ENCODE measurements at regions of chr7 and their contacts with region 1.

Region 1: GRCh38 chr7:50206453-50207250 is 97.9 kb upstream of the IKZF1 start:
- DNase-seq: peak; percentile 44 to 87 (median 84)
- H3K4me3 ChIP-seq: no peak overlapping the region
- H3K27ac ChIP-seq: no peak overlapping the region
- H3K4me1 ChIP-seq: peaks cover 14 to 63% (median 45%) of the 10 kb centered on the region in 4 experiments
- H3K27me3 ChIP-seq: no peaks in the 10 kb centered on the region

Region 2: GRCh38 chr7:50185208-50185607 is 21.4 kb before region 1 on chr7:
- CTCF ChIA-PET with region 1: interaction called, 21 read pairs
- POLR2A ChIA-PET with region 1: no interaction called
- DNase-seq: peak in 2 of 3 donors; percentile 61 to 71
- H3K4me3 ChIP-seq: peak overlapping the region in 1 of 7 experiments; percentile 0
- H3K27ac ChIP-seq: peak overlapping the region in 1 of 2 experiments; percentile 12
- H3K4me1 ChIP-seq: peaks cover 26 to 62% (median 41%) of the 10 kb centered on the region in 4 experiments
- H3K27me3 ChIP-seq: no peaks in the 10 kb centered on the region

Region 3: GRCh38 chr7:50304158-50304910 is 97.7 kb after region 1 on chr7 and contains the start of gene IKZF1:
- CTCF ChIA-PET with region 1: interaction called, 20 read pairs
- POLR2A ChIA-PET with region 1: interaction called, 3 read pairs
- DNase-seq: peak; percentile 82 to 84 (median 83)
- H3K4me3 ChIP-seq: peak within 1 kb of the TSS; percentile 80 to 100 (median 94)
- H3K27ac ChIP-seq: peak within 1 kb of the TSS; percentile 67 to 87
- H3K4me1 ChIP-seq: peaks cover 22 to 41% (median 33%) of the 10 kb centered on the region in 4 experiments
- H3K27me3 ChIP-seq: no peaks in the 10 kb centered on the region

Region 4: DNA sequence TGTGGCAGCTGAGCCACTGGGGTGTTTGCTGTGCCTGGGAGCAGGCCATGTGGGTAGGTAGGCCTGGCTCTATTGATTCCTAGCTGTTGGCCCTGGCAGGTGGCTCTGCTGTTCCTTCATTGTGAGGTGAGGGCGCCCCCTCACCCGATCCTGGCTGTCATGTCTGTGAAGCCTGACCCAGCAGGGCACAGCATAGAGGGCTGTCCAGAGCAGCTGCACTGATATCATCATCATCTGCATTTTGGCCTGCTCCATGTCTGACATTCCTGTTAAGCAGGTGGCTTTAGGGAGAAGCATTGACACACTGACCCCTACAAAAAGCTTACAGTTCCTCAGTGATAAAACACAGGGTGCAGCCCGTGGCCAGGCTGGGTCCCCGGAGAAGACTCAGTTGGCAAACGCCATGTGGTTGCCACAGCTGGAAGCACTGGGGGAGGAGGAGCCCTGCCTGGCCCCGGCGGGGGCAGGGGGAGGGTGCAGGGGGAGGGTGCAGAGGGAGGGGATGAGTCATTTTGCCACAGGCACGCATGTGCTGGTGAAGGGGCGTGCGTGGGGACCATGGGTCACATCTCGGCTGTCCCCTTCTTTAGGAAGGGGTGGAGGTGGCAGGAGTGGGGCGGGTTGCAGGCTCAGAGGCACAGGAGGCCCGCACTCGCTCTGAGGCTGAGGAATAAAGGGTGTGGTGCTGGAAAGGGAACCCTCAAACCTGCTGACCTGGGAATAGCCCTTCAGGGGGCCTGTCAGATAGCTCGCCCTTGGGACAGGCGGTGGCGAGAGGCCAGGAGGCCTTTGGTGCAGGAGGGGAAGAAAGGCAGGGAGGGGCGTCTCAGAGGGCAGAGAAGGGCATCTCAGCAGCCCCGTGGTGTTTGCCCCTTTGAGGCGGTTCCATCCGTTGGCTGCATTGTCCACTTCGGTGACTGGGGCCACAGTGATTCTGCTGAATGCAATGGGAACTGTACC is 129.4 kb after region 1 on chr7:
- CTCF ChIA-PET with region 1: interaction called, 14 read pairs
- POLR2A ChIA-PET with region 1: no interaction called
- DNase-seq: peak; percentile 69 to 91 (median 91)
- H3K4me3 ChIP-seq: peak overlapping the region in 2 of 7 experiments; percentile 1 to 12
- H3K27ac ChIP-seq: peak overlapping the region; percentile 55 to 87
- H3K4me1 ChIP-seq: peaks cover 64 to 100% (median 97%) of the 10 kb centered on the region in 4 experiments
- H3K27me3 ChIP-seq: no peaks in the 10 kb centered on the region

Region 5: DNA sequence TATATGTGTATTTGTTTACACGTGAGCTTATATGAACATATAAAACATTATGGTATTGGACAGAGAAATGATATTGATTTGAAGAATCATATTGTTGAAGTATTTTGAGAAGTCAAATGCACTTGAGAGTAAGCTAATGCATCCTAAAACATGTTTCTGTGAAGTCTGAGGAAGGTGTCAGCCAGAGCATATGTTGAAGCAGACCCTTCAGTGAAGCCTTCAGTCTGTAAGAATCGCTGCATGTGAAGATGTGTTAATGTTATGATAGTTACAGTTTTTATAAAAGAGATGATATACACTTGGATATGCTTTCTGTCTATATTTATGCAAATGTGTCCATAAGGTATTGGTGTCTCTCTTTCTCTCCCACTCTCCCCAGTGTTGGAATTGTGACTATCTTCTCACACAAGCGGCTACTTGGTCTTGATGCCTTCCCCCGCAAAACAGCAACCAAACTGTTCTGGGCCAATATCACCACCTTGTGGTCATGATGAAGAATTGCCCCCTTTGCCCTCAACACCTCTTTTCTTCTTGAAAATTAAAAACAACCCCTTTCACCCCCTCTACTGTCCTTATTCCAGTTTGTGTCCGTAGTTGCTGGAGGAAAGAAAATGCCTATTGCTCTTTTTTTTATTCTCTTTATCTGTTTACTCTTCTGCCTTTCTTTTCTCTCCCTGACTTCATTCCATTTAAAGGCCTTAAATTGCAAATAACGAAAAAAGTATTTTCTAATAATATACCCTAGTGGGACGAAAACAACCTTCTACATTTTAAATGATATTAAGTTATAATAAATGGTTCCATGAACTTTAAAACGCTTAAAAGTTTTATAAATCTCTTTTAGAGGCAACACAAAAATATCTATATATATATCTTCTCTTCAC is 162.7 kb after region 1 on chr7:
- CTCF ChIA-PET with region 1: interaction called, 172 read pairs
- POLR2A ChIA-PET with region 1: no interaction called
- DNase-seq: peak; percentile 87 to 93 (median 90)
- H3K4me3 ChIP-seq: no peak overlapping the region
- H3K27ac ChIP-seq: no peak overlapping the region
- H3K4me1 ChIP-seq: peaks cover 10 to 26% (median 14%) of the 10 kb centered on the region in 4 experiments
- H3K27me3 ChIP-seq: no peaks in the 10 kb centered on the region

Measured in common myeloid progenitor, CD34-positive (primary cell).